CD4-positive, alpha-beta T cell (primary cell): ENCODE measurements at regions of chr6 and their contacts with region 1.

Region 1: DNA sequence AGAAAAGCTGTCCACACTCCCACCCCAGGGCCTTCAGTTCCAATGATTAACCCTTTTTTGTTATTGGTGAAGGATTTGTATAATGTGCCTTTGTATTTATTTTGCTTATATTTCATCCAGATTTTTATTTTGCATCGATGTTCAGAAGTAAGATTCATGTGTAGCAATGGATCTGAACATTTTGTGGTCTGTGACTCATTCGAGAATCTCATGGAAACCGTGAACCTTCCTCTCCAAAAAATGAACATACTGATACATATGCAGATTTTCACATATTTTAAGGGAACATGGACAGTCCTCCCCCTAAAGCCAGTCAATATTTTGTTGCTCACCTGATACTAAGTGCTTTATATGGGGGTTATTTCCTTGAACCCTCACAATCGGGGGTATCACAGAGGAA is 421.8 kb upstream of the SOX4 start:
- DNase-seq: no peak
- ATAC-seq: no peak
- H3K4me3 ChIP-seq: no peak overlapping the region
- H3K4me3 Mint-ChIP-seq: no peak overlapping the region
- H3K27ac ChIP-seq: no peak overlapping the region
- H3K27ac Mint-ChIP-seq: no peak overlapping the region
- H3K4me1 ChIP-seq: no peaks in the 10 kb centered on the region
- H3K4me1 Mint-ChIP-seq: no peaks in the 10 kb centered on the region
- H3K27me3 ChIP-seq: no peaks in the 10 kb centered on the region
- H3K27me3 Mint-ChIP-seq: no peaks in the 10 kb centered on the region
- CTCF ChIP-seq: no peak

Region 2: DNA sequence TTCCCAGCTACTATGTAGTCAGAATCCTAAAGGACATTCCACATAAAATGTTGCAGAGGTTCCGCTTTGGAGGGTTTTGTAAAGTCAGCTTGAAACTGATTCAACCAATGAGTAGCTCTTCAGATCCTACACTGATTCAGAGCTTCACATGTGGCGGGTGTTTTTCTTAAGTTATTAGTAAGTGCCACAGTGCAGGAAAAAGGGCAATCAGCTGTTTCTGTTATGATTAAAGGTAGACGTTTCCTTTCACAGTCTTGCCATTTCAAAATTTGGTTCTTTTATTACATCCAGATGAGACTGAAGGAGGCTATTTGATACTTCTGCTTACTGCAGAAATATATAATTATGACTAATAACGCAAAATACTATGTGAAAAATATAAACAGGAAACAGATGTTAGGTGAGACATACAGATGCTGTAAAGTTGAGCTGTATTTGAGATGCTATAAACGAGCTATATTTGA is 193.6 kb before region 1 on chr6:
- CTCF ChIA-PET with region 1: no interaction called
- POLR2A ChIA-PET with region 1: no interaction called
- intact Hi-C with region 1: no loop called
- DNase-seq: no peak
- ATAC-seq: no peak
- H3K4me3 ChIP-seq: no peak overlapping the region
- H3K4me3 Mint-ChIP-seq: no peak overlapping the region
- H3K27ac ChIP-seq: no peak overlapping the region
- H3K27ac Mint-ChIP-seq: no peak overlapping the region
- H3K4me1 ChIP-seq: no peaks in the 10 kb centered on the region
- H3K4me1 Mint-ChIP-seq: no peaks in the 10 kb centered on the region
- H3K27me3 ChIP-seq: no peaks in the 10 kb centered on the region
- H3K27me3 Mint-ChIP-seq: no peaks in the 10 kb centered on the region
- CTCF ChIP-seq: no peak

Region 3: DNA sequence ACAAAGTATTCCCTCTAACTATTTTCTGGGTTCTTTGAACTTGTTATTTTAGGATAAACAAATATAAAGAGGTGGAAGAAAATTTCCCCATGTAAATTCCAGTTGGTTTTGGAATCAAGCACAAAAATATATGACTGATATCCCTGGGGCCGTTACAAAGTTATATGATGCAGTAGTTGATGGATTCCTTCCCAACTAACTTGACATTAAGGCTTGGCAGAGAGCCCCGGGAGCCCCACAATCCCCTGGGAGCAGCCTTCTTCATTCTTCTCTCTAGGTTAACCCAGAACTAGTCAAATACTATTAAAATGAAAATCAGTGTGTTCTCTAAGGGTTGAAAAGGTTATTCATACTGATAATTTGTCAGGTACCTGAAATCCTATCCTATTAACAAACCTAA is 87.1 kb before region 1 on chr6:
- CTCF ChIA-PET with region 1: no interaction called
- POLR2A ChIA-PET with region 1: no interaction called
- intact Hi-C with region 1: no loop called
- DNase-seq: no peak
- ATAC-seq: no peak
- H3K4me3 ChIP-seq: no peak overlapping the region
- H3K4me3 Mint-ChIP-seq: no peak overlapping the region
- H3K27ac ChIP-seq: no peak overlapping the region
- H3K27ac Mint-ChIP-seq: no peak overlapping the region
- H3K4me1 ChIP-seq: no peaks in the 10 kb centered on the region
- H3K4me1 Mint-ChIP-seq: no peaks in the 10 kb centered on the region
- H3K27me3 ChIP-seq: no peaks in the 10 kb centered on the region
- H3K27me3 Mint-ChIP-seq: no peaks in the 10 kb centered on the region
- CTCF ChIP-seq: no peak

Region 4: GRCh38 chr6:21149470-21149869 is 22.3 kb before region 1 on chr6:
- CTCF ChIA-PET with region 1: no interaction called
- POLR2A ChIA-PET with region 1: no interaction called
- intact Hi-C with region 1: no loop called
- DNase-seq: no peak
- ATAC-seq: no peak
- H3K4me3 ChIP-seq: no peak overlapping the region
- H3K4me3 Mint-ChIP-seq: no peak overlapping the region
- H3K27ac ChIP-seq: no peak overlapping the region
- H3K27ac Mint-ChIP-seq: no peak overlapping the region
- H3K4me1 ChIP-seq: no peaks in the 10 kb centered on the region
- H3K4me1 Mint-ChIP-seq: no peaks in the 10 kb centered on the region
- H3K27me3 ChIP-seq: no peaks in the 10 kb centered on the region
- H3K27me3 Mint-ChIP-seq: no peaks in the 10 kb centered on the region
- CTCF ChIP-seq: no peak

Region 5: GRCh38 chr6:21836772-21837425 is 665.1 kb after region 1 on chr6:
- CTCF ChIA-PET with region 1: no interaction called
- POLR2A ChIA-PET with region 1: no interaction called
- intact Hi-C with region 1: loop called in 1 of 2 experiments (anchors 5 kb)
- DNase-seq: no peak
- ATAC-seq: no peak
- H3K4me3 ChIP-seq: no peak overlapping the region
- H3K4me3 Mint-ChIP-seq: no peak overlapping the region
- H3K27ac ChIP-seq: no peak overlapping the region
- H3K27ac Mint-ChIP-seq: no peak overlapping the region
- H3K4me1 ChIP-seq: no peaks in the 10 kb centered on the region
- H3K4me1 Mint-ChIP-seq: no peaks in the 10 kb centered on the region
- H3K27me3 ChIP-seq: no peaks in the 10 kb centered on the region
- H3K27me3 Mint-ChIP-seq: no peaks in the 10 kb centered on the region
- CTCF ChIP-seq: no peak